ENCODE measurements at regions of chr2 and their contacts with region 1.

Region 1: GRCh38 chr2:197378494-197379307 is 56.1 kb downstream of the SF3B1 start:
- DNase-seq: no peak
- H3K4me3 ChIP-seq: no peak overlapping the region
- H3K27ac ChIP-seq: no peak overlapping the region
- H3K4me1 ChIP-seq: peaks cover 0 to 7% (median 0%) of the 10 kb centered on the region in 3 donors
- H3K27me3 ChIP-seq: peaks cover 0 to 6% (median 0%) of the 10 kb centered on the region in 4 donors
- CTCF ChIP-seq: peak; percentile 66 to 82 (median 74)
- POLR2A ChIP-seq: no peak

Region 2: GRCh38 chr2:197113275-197113711 is 265.4 kb before region 1 on chr2:
- intact Hi-C with region 1: loop called (anchors 10 kb)
- DNase-seq: no peak
- H3K4me3 ChIP-seq: no peak overlapping the region
- H3K27ac ChIP-seq: no peak overlapping the region
- H3K4me1 ChIP-seq: peaks cover 0 to 10% (median 3%) of the 10 kb centered on the region in 3 donors
- H3K27me3 ChIP-seq: no peaks in the 10 kb centered on the region
- CTCF ChIP-seq: peak; percentile 28 to 63 (median 55)
- POLR2A ChIP-seq: no peak

Region 3: GRCh38 chr2:197184959-197185586 is 193.6 kb before region 1 on chr2:
- intact Hi-C with region 1: loop called (anchors 10 kb)
- DNase-seq: no peak
- H3K4me3 ChIP-seq: no peak overlapping the region
- H3K27ac ChIP-seq: peak overlapping the region in 2 of 4 donors; percentile 13 to 33
- H3K4me1 ChIP-seq: peaks cover 0 to 50% (median 4%) of the 10 kb centered on the region in 3 donors
- H3K27me3 ChIP-seq: no peaks in the 10 kb centered on the region
- CTCF ChIP-seq: no peak
- POLR2A ChIP-seq: no peak

Region 4: DNA sequence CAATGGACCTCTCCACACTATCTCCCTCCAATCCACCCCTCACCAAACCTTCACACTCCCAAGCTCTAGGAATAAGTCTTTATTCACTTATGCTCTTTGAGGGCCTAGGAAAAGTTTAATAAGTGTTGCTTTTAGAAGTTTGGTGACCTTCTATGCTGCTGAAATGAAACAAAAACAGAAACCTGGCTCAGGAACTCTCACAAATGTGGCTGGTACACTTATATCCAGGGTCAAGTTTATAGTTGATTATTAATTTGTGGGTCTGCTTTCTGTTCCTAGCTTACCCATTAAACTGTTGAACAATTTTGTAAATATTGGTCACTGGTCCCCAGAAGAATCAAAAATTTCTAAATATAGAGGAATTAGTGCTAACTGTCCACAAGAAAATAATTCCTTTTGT is 53.9 kb before region 1 on chr2:
- intact Hi-C with region 1: no loop called
- DNase-seq: no peak
- H3K4me3 ChIP-seq: no peak overlapping the region
- H3K27ac ChIP-seq: no peak overlapping the region
- H3K4me1 ChIP-seq: no peaks in the 10 kb centered on the region
- H3K27me3 ChIP-seq: no peaks in the 10 kb centered on the region
- CTCF ChIP-seq: no peak
- POLR2A ChIP-seq: no peak

Region 5: DNA sequence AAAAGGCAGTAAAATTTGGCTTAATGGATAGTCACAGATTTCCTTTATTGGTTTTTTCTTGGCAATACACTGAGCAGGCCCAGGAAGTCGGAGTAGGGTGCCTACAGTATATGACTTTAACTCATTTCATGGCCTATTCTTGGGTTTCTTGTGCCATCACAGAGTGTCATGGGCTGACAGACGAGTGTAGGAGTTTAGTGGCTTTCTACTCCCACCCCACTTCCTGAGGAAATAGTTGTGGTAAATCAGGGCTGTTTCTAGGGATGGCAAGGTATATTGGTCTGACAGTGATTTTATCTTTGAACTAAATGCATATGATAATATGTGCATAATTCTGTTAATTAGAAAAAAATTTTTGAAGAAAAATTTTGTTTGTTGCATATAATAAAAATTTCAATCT is 525.7 kb after region 1 on chr2:
- intact Hi-C with region 1: no loop called
- DNase-seq: no peak
- H3K4me3 ChIP-seq: no peak overlapping the region
- H3K27ac ChIP-seq: no peak overlapping the region
- H3K4me1 ChIP-seq: no peaks in the 10 kb centered on the region
- H3K27me3 ChIP-seq: no peaks in the 10 kb centered on the region
- CTCF ChIP-seq: no peak
- POLR2A ChIP-seq: no peak

Region 6: DNA sequence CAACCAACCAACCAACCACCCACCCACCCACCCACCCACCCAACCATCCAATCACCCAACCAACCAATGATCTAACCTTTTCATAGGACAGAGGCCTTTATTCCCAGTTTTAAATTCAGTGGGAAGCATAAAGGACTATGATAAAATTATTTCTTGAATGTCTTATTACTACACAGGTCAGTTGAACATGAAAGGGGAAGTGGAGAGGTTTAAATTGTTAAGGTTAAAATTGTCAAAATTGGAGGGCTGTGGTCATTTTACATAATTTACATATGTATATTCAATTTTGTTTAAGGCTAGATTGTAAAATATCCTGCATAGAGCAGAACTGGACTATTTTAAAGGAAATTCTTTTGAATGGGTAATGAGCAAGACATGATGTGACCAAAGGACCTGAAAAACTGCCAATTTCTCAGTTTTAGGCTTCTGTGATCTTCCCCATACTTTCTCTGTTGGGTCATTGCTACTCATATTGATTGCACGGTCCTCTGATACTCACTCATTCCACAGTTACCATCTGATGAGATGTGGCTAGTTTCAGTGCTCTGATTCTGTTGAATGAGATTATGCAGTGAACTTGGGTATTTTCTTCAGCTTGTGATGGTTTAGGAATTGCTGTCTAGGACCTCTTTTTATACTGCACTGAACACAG is 553.1 kb after region 1 on chr2:
- intact Hi-C with region 1: no loop called
- DNase-seq: no peak
- H3K4me3 ChIP-seq: no peak overlapping the region
- H3K27ac ChIP-seq: no peak overlapping the region
- H3K4me1 ChIP-seq: peaks cover 0 to 8% (median 0%) of the 10 kb centered on the region in 3 donors
- H3K27me3 ChIP-seq: no peaks in the 10 kb centered on the region
- CTCF ChIP-seq: no peak
- POLR2A ChIP-seq: no peak

Measured in esophagus squamous epithelium (tissue), 5 donors.